Activated T-helper 2 cell treated with anti-CD3 and anti-CD28 coated beads, Interferon-gamma antibody, Interleukin-2, Interleukin-4, amounts not matched to agents 10 μg/mL and 5 μg/mL and 100 μg/mL, durations not matched to agents 14 hours and 24 hours and 36 hours (primary cell): ENCODE measurements at regions of chr7 and their contacts with region 1.

Region 1: DNA sequence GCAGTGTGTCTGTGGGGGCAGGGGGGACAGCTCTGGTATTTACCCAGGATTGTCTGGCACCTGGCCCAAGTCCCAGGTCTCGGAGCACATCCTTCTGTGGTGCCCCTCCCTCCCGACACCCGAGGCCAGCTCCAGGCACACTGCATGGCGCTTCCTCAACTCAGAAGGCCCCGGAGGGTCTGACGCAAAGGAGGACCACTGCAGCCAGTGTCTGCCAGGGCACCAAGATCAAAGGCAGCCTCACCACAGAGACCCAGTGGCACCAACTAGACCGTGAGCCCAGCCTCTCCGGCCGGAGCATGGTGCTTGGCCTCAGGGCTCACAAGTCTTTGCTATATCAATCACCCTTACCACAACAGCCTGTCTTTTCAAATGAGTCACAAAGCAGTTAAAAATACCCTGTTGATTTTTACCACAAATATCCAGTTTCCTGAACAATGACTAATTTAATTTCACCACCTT is 99.3 kb upstream of the DDC start:
- DNase-seq: no peak
- H3K4me3 Mint-ChIP-seq: no peak overlapping the region
- H3K27ac Mint-ChIP-seq: no peak overlapping the region
- H3K4me1 Mint-ChIP-seq: peaks cover 67% of the 10 kb centered on the region
- H3K27me3 Mint-ChIP-seq: no peaks in the 10 kb centered on the region

Region 2: DNA sequence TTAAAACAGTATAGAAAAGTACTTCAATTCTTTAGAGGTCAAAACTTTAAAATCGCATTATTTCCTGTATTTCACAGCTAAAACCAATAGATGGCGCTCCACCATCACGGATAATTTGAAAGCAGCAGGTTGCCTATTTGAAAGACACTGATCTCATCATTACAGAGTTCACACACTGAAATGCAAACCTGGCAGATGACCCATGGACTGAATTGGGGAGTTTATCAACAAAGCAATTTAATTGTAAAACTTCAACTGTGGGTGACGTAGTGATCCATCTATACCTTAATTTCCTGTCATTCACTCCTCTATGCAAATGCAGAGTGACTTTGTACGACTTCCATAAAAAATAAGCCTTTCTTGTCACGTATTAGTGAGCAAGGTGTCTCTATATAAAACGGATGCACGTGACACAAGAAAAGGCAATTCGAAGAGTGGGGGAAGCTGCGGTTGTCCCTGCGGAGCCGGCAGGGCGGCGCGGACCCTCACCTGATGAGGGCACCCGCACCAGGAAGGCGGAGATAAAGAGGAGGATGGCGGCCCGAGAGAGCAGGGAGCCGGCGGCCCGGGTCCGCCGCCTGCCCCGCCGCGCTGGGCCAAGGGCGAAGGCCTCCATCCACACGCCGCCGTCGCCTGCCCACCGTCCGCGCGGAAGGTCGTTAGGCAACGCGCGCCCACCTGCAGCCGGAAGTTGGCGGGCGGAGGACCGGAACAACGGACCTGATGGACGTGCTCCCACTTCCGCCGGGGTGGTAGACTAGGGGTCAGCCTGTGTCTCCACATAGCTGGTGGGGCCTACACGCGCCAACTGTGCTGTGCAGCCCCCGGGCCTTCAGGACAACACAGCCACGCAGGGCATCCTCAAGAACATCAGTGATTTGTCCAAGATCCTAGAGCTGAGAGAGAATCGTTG is 571.7 kb before region 1 on chr7 and contains the start of gene ZPBP:
- intact Hi-C with region 1: loop called (anchors 5 kb)
- DNase-seq: peak; percentile 40
- H3K4me3 Mint-ChIP-seq: peak within 1 kb of the TSS; percentile 81
- H3K27ac Mint-ChIP-seq: peak within 1 kb of the TSS; percentile 39
- H3K4me1 Mint-ChIP-seq: peaks cover 9% of the 10 kb centered on the region
- H3K27me3 Mint-ChIP-seq: peaks cover 30% of the 10 kb centered on the region
- total RNA-seq, gene ZPBP: not detected in 2 replicates

Region 3: DNA sequence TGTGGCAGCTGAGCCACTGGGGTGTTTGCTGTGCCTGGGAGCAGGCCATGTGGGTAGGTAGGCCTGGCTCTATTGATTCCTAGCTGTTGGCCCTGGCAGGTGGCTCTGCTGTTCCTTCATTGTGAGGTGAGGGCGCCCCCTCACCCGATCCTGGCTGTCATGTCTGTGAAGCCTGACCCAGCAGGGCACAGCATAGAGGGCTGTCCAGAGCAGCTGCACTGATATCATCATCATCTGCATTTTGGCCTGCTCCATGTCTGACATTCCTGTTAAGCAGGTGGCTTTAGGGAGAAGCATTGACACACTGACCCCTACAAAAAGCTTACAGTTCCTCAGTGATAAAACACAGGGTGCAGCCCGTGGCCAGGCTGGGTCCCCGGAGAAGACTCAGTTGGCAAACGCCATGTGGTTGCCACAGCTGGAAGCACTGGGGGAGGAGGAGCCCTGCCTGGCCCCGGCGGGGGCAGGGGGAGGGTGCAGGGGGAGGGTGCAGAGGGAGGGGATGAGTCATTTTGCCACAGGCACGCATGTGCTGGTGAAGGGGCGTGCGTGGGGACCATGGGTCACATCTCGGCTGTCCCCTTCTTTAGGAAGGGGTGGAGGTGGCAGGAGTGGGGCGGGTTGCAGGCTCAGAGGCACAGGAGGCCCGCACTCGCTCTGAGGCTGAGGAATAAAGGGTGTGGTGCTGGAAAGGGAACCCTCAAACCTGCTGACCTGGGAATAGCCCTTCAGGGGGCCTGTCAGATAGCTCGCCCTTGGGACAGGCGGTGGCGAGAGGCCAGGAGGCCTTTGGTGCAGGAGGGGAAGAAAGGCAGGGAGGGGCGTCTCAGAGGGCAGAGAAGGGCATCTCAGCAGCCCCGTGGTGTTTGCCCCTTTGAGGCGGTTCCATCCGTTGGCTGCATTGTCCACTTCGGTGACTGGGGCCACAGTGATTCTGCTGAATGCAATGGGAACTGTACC is 328.4 kb before region 1 on chr7:
- intact Hi-C with region 1: loop called (anchors 10 kb)
- DNase-seq: peak; percentile 77
- H3K4me3 Mint-ChIP-seq: no peak overlapping the region
- H3K27ac Mint-ChIP-seq: no peak overlapping the region
- H3K4me1 Mint-ChIP-seq: peaks cover 62% of the 10 kb centered on the region
- H3K27me3 Mint-ChIP-seq: no peaks in the 10 kb centered on the region

Region 4: DNA sequence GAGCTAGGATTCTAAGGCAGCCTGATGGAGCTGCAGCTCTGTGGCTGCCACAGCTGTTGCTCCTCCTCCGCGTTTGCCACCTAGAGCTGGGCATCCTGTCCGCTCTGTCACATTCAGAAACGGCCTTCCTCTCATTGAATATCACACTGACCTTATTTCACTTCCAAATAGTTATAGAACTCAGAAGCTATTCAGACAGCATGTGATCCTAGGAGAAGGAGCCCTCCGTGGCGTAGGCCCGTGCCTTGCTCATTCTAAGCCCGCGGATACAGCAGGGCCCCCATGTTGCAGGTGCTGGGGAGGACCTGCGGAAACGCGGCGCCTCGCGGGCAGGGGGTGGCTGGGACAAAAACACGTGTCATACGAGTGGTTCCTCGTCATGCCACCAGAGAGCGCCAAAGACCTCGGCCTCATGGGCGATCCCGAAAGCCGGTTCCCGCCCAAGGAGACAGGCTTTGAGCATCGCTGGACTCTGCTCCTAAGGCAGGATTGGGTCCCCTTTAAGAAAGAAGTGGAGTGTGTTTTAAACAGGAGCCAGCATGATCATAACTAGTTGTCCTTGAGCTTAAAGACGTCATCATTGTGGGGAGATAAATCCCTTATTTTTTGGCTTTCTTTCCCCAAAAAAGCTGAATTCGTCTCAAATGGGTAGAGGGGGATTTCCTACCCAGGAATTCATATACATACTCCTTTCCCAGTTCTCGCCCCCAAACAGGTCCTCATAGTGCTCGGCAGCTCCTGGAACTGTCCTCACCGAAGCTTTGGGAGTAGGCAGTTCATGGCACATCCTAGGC is 196.5 kb before region 1 on chr7:
- intact Hi-C with region 1: loop called (anchors 5 kb)
- DNase-seq: peak; percentile 74
- H3K4me3 Mint-ChIP-seq: peak overlapping the region; percentile 7
- H3K27ac Mint-ChIP-seq: no peak overlapping the region
- H3K4me1 Mint-ChIP-seq: peaks cover 8% of the 10 kb centered on the region
- H3K27me3 Mint-ChIP-seq: peaks cover 1% of the 10 kb centered on the region

Region 5: GRCh38 chr7:50610521-50611277 is 53.8 kb before region 1 on chr7:
- intact Hi-C with region 1: loop called (anchors 2 kb)
- DNase-seq: peak; percentile 47
- H3K4me3 Mint-ChIP-seq: no peak overlapping the region
- H3K27ac Mint-ChIP-seq: no peak overlapping the region
- H3K4me1 Mint-ChIP-seq: peaks cover 45% of the 10 kb centered on the region
- H3K27me3 Mint-ChIP-seq: no peaks in the 10 kb centered on the region

Region 6: GRCh38 chr7:51123322-51124029 is 459.0 kb after region 1 on chr7:
- intact Hi-C with region 1: loop called (anchors 2 kb)
- DNase-seq: peak; percentile 38
- H3K4me3 Mint-ChIP-seq: no peak overlapping the region
- H3K27ac Mint-ChIP-seq: peak overlapping the region; percentile 90
- H3K4me1 Mint-ChIP-seq: peaks cover 33% of the 10 kb centered on the region
- H3K27me3 Mint-ChIP-seq: peaks cover 2% of the 10 kb centered on the region